ENCODE measurements at regions of chr17 and their contacts with region 1.

Region 1: GRCh38 chr17:29589524-29590410 is at the start of gene GIT1:
- DNase-seq: peak; percentile 65 to 94 (median 81)
- ATAC-seq: peak; percentile 83
- H3K4me3 ChIP-seq: peak within 1 kb of the TSS; percentile 84
- H3K4me3 Mint-ChIP-seq: peak within 1 kb of the TSS; percentile 98
- H3K27ac ChIP-seq: peak within 1 kb of the TSS; percentile 60 to 64
- H3K27ac Mint-ChIP-seq: peak within 1 kb of the TSS; percentile 86
- H3K4me1 ChIP-seq: peaks cover 84% of the 10 kb centered on the region
- H3K4me1 Mint-ChIP-seq: peaks cover 71% of the 10 kb centered on the region
- H3K27me3 ChIP-seq: no peaks in the 10 kb centered on the region
- H3K27me3 Mint-ChIP-seq: no peaks in the 10 kb centered on the region
- CTCF ChIP-seq: no peak
- total RNA-seq, gene GIT1: 35.8 to 36.7 TPM

Region 2: GRCh38 chr17:29495011-29495410 is 94.8 kb before region 1 on chr17:
- CTCF ChIA-PET with region 1: no interaction called
- POLR2A ChIA-PET with region 1: no interaction called
- intact Hi-C with region 1: no loop called
- DNase-seq: no peak
- ATAC-seq: no peak
- H3K4me3 ChIP-seq: no peak overlapping the region
- H3K4me3 Mint-ChIP-seq: no peak overlapping the region
- H3K27ac ChIP-seq: no peak overlapping the region
- H3K27ac Mint-ChIP-seq: no peak overlapping the region
- H3K4me1 ChIP-seq: no peaks in the 10 kb centered on the region
- H3K4me1 Mint-ChIP-seq: no peaks in the 10 kb centered on the region
- H3K27me3 ChIP-seq: no peaks in the 10 kb centered on the region
- H3K27me3 Mint-ChIP-seq: no peaks in the 10 kb centered on the region
- CTCF ChIP-seq: no peak

Region 3: DNA sequence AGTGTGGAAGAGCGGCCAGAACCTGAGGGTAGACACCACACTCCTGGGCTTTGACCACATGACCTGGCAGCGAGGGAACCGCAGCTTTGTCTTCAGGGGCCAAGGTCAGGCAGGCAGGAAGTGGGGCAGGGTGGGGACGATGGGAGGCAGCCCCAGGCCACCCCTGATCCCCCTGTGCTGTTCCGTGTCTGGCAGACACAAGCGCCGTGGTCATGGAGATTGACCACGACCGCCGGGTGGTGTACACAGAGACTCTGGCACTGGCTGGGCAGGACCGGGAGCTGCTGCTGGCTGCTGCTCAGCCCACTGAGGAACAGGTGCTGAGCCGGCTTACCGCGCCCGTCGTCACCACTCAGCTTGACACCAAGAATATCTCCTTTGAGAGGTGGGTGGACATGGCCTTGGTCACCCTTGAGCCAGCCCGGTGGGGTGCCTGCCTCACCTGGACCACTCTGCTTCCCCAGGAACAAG is 19.2 kb after region 1 on chr17:
- CTCF ChIA-PET with region 1: interaction called, 96 read pairs
- POLR2A ChIA-PET with region 1: interaction called, 6 read pairs
- intact Hi-C with region 1: loop called in 1 of 2 experiments (anchors 1 kb)
- DNase-seq: no peak
- ATAC-seq: no peak
- H3K4me3 ChIP-seq: no peak overlapping the region
- H3K4me3 Mint-ChIP-seq: no peak overlapping the region
- H3K27ac ChIP-seq: no peak overlapping the region
- H3K27ac Mint-ChIP-seq: no peak overlapping the region
- H3K4me1 ChIP-seq: peaks cover 12% of the 10 kb centered on the region
- H3K4me1 Mint-ChIP-seq: peaks cover 3% of the 10 kb centered on the region
- H3K27me3 ChIP-seq: no peaks in the 10 kb centered on the region
- H3K27me3 Mint-ChIP-seq: no peaks in the 10 kb centered on the region
- CTCF ChIP-seq: no peak

Region 4: DNA sequence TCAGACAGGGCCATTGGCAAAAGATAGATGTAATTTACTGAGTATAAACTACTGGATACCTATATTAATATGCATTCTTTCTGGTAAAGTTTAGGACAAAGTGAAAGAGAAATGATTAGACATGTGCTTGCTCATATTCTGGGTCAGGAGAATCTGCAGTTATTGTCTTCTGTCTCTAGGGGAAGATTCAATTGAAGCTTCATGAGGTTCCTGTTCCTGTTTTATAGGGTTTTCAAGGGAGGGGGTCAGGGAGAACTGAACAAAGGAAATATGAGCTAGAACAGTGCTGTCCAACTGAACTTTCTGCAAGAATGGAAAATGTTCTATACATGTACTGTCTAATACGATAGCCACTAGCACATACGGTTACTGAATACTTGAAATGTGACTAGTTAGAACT is 92.3 kb after region 1 on chr17:
- CTCF ChIA-PET with region 1: no interaction called
- POLR2A ChIA-PET with region 1: no interaction called
- intact Hi-C with region 1: no loop called
- DNase-seq: peak in 3 of 14 experiments; percentile 36 to 44 (median 42)
- ATAC-seq: peak; percentile 56
- H3K4me3 ChIP-seq: no peak overlapping the region
- H3K4me3 Mint-ChIP-seq: no peak overlapping the region
- H3K27ac ChIP-seq: peak overlapping the region in 1 of 2 donors; percentile 27
- H3K27ac Mint-ChIP-seq: peak overlapping the region; percentile 77
- H3K4me1 ChIP-seq: peaks cover 4% of the 10 kb centered on the region
- H3K4me1 Mint-ChIP-seq: peaks cover 24% of the 10 kb centered on the region
- H3K27me3 ChIP-seq: no peaks in the 10 kb centered on the region
- H3K27me3 Mint-ChIP-seq: no peaks in the 10 kb centered on the region
- CTCF ChIP-seq: no peak